PC-3 (cell line): ENCODE measurements at regions of chrX and their contacts with region 1.

Region 1: DNA sequence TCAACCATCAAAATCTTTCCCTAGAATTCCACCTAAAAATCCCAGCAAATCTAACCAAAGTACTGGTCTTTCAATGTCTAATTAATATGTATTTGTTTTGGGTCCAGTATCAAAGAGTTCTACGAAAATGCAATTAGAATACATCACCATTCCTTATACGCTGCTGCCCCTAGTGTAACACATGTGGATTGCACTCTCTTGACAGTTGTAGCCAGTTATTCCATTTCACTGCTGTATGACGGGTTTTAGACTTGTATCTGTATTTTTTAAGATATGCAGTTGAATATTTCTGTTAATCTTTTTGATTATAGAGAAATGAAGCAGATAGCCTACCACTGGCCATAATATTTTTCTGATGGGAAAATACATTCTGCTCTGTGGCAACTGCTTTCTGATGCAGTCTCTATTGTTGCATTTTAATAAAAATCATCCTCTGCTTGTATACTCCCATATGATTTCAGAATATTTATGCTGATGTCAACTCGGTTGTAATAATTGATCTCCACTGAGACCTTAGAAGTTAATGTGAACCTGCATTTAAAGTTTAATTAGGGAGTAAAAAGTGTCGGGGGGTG is 17.1 kb upstream of the PAGE2B start:
- DNase-seq: peak; percentile 61
- ATAC-seq: peak; percentile 66
- H3K4me3 ChIP-seq: no peak overlapping the region
- H3K27ac ChIP-seq: no peak overlapping the region
- H3K4me1 ChIP-seq: 0 out of 2 replicates have a peak, but pooled peaks cover 8% of the 10 kb centered on the region
- H3K27me3 ChIP-seq: no peaks in the 10 kb centered on the region
- CTCF ChIP-seq: peak; percentile 89

Region 2: DNA sequence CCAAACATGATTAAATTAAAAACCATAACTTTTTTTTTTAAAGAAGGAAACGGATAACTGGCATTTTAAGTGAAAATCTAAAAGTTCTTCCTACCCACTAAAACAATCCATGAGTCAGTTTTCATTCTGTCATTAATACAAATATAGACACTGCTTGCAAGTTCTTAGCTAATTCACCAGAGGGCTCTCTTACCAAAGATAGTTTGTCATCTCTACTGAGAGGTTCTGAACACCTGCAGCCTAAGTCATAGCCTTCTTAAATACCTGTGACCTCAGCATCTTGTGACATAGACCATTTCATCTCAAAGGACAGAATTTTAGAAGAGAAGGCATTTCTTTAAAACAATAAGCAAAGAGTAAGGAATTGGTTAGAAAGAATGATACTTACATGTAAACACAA is 809.5 kb before region 1 on chrX:
- CTCF ChIA-PET with region 1: no interaction called
- POLR2A ChIA-PET with region 1: no interaction called
- intact Hi-C with region 1: loop called (anchors 5 kb)
- DNase-seq: peak; percentile 61
- ATAC-seq: peak; percentile 81
- H3K4me3 ChIP-seq: no peak overlapping the region
- H3K27ac ChIP-seq: no peak overlapping the region
- H3K4me1 ChIP-seq: no peaks in the 10 kb centered on the region
- H3K27me3 ChIP-seq: no peaks in the 10 kb centered on the region
- CTCF ChIP-seq: peak; percentile 65

Region 3: GRCh38 chrX:54639346-54640102 is 418.2 kb before region 1 on chrX:
- CTCF ChIA-PET with region 1: interaction called, 4 read pairs
- POLR2A ChIA-PET with region 1: interaction called, 3 read pairs
- intact Hi-C with region 1: loop called (anchors 10 kb)
- DNase-seq: peak; percentile 91
- ATAC-seq: peak; percentile 94
- H3K4me3 ChIP-seq: peak overlapping the region; percentile 77
- H3K27ac ChIP-seq: peak overlapping the region; percentile 82
- H3K4me1 ChIP-seq: peaks cover 5% of the 10 kb centered on the region
- H3K27me3 ChIP-seq: no peaks in the 10 kb centered on the region
- CTCF ChIP-seq: peak; percentile 78

Region 4: DNA sequence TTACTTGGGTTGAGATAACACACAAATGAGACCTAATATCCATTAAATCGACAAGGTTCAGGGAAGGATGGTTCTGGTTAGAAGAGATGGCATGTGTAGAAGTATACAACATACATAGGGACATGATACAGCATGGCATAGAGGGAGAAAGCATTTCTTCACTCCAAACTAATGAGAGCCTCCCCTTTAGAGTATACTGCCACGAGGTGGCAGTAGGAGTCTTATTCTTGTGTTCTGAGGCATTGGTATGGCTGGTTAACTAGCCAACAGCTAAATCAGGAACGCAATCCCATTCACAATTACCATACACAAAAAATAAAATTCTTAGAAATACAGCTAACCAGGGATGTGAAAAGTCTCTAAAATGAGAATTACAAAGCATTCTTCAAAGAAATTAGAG is 166.2 kb before region 1 on chrX:
- CTCF ChIA-PET with region 1: no interaction called
- POLR2A ChIA-PET with region 1: no interaction called
- intact Hi-C with region 1: loop called (anchors 1 kb)
- DNase-seq: peak; percentile 62
- ATAC-seq: peak; percentile 60
- H3K4me3 ChIP-seq: no peak overlapping the region
- H3K27ac ChIP-seq: no peak overlapping the region
- H3K4me1 ChIP-seq: no peaks in the 10 kb centered on the region
- H3K27me3 ChIP-seq: no peaks in the 10 kb centered on the region
- CTCF ChIP-seq: peak; percentile 63; the same call in 1 of the 2 replicates

Region 5: DNA sequence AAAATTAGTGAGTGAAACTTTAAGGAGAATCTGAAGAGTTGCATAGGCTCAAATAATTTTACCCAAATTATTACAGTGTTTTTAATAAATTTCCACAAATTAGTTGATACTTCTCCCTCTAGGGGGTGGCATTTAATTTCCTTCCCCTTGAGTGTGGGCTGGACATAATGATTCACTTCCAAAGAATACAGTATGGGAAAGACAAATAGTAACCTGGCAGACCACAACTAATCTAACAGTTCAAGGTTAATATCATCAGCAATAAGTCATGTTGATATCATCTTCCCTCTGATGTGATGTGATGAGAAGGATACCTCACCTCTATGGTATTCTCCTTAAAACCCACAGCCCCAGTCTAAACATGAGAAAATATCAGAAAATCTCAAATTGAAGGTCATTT is 79.3 kb before region 1 on chrX:
- CTCF ChIA-PET with region 1: no interaction called
- POLR2A ChIA-PET with region 1: no interaction called
- intact Hi-C with region 1: loop called (anchors 1 kb)
- DNase-seq: peak; percentile 79
- ATAC-seq: peak; percentile 95
- H3K4me3 ChIP-seq: no peak overlapping the region
- H3K27ac ChIP-seq: peak overlapping the region; percentile 61
- H3K4me1 ChIP-seq: peaks cover 15% of the 10 kb centered on the region
- H3K27me3 ChIP-seq: no peaks in the 10 kb centered on the region
- CTCF ChIP-seq: peak; percentile 63

Region 6: DNA sequence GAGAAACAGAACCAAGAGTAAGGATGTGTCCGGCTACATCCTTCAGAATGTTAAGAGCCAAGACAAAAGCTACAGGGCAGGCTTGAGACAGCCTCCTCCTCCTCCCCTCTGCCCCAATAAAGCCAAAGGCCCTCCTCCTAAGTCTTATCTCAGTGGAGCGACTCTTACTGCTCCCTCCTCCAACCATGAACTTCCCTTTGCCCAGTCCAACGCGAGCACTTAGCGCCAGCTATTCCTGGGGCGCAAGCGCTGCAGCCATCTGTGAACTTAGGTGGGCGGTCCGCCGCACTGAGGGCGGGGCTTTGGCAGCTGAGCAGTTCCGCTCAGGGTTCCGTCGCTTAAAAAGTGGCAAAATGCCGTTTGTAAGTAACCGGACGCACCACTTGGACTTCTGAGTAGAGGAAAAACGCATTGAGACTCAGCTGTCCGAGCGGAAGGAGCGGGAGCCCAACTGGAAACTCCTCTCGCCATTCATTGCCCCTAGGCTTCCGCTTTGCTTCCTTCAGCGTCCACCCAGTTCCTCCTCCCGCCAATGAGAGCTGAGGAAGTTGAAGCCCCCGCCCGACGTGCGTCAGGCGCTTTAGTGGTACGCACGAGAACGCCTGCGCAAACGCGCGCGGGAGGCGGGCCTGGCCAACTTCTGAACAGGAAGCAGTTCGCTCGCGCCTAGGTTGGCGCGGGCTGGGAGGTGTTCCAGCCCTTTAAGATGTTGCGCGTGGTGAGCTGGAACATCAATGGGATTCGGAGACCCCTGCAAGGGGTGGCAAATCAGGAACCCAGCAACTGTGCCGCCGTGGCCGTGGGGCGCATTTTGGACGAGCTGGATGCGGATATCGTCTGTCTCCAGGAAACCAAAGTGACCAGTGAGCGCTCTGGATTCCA is 57.8 kb before region 1 on chrX and contains the start of gene APEX2:
- CTCF ChIA-PET with region 1: no interaction called
- POLR2A ChIA-PET with region 1: no interaction called
- intact Hi-C with region 1: no loop called
- DNase-seq: peak; percentile 94
- ATAC-seq: peak; percentile 91
- H3K4me3 ChIP-seq: peak within 1 kb of the TSS; percentile 91
- H3K27ac ChIP-seq: peak within 1 kb of the TSS; percentile 95
- H3K4me1 ChIP-seq: peaks cover 44% of the 10 kb centered on the region
- H3K27me3 ChIP-seq: no peaks in the 10 kb centered on the region
- CTCF ChIP-seq: no peak
- total RNA-seq, gene APEX2: 24.7 and 30.9 TPM in 2 replicates

Region 7: DNA sequence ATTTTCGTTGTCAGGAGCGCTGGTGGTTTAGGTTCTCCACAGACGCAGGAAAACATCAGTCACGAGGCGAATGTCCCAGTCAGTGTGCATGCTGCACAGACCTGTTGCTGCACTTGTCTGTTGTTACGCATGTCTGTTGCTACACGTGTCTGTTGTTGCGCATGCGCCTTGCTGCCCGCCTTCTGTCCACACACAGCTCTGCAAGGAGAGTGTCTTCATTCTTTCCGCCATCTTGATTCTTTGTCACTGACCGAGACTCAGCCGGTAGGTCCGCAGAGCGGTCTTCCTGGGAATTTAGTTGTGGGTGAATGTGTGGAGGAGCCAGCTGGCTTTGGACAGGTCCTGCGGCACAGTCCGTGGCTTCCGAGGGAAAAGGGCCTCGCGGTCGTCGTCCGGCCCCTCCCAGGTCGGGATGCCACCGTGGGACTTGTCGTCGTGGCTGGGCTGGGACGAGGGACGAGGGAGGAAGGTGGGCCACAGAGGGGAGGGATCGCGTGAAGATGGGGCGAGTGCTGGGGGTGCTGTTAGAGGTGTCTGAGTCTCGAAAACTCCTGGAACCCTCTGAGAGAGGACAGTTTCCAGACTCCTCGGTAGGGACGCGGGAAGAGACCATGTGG is 17.2 kb after region 1 on chrX and contains the start of gene PAGE2B:
- CTCF ChIA-PET with region 1: no interaction called
- POLR2A ChIA-PET with region 1: no interaction called
- intact Hi-C with region 1: no loop called
- DNase-seq: no peak
- ATAC-seq: no peak
- H3K4me3 ChIP-seq: no peak within 1 kb of the TSS
- H3K27ac ChIP-seq: no peak within 1 kb of the TSS
- H3K4me1 ChIP-seq: no peaks in the 10 kb centered on the region
- H3K27me3 ChIP-seq: peaks cover under 1% of the 10 kb centered on the region; the same call in 1 of the 2 replicates
- CTCF ChIP-seq: no peak
- total RNA-seq, gene PAGE2B: not detected in 2 replicates